PC-9 (cell line): ENCODE measurements at regions of chr3 and their contacts with region 1.

Region 1: DNA sequence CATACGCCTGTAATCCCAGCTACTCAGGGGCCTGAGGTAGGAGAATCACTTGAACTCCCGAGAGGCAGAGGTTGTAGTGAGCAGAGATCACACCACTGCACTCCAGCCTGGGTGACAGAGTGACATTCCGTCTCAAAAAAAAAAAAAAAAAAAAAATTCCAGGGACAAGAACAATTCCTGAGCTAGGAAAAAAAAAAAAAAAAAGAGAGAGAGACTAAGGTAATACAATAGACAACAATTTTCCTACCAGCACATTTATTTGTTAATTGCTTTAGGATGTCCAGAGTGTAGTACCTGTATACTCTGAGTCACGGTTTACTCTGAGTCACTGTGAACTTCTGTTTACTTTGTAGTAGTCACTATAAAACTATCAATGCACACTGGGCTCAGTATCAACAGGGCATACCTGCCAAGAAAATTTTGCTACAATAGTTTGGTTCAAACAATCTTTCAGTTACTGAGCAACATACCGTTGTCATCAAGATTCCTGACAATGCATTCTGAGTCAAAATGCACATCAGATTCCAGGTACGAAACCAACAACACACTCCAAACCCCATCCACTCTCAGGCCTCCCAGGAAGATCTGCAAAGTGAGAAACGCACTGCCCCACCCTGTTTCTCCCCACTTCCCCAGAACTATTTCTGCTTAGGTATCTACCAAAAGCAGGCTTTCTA is 28.3 kb downstream of the IGF2BP2 start:
- DNase-seq: peak; percentile 86 to 100
- H3K4me3 ChIP-seq: 0 out of 2 replicates have a peak overlapping the region, but pooled peaks have one; percentile 10
- H3K27ac ChIP-seq: peak overlapping the region; percentile 93
- H3K4me1 ChIP-seq: peaks cover 63% of the 10 kb centered on the region
- H3K27me3 ChIP-seq: no peaks in the 10 kb centered on the region
- CTCF ChIP-seq: no peak

Region 2: DNA sequence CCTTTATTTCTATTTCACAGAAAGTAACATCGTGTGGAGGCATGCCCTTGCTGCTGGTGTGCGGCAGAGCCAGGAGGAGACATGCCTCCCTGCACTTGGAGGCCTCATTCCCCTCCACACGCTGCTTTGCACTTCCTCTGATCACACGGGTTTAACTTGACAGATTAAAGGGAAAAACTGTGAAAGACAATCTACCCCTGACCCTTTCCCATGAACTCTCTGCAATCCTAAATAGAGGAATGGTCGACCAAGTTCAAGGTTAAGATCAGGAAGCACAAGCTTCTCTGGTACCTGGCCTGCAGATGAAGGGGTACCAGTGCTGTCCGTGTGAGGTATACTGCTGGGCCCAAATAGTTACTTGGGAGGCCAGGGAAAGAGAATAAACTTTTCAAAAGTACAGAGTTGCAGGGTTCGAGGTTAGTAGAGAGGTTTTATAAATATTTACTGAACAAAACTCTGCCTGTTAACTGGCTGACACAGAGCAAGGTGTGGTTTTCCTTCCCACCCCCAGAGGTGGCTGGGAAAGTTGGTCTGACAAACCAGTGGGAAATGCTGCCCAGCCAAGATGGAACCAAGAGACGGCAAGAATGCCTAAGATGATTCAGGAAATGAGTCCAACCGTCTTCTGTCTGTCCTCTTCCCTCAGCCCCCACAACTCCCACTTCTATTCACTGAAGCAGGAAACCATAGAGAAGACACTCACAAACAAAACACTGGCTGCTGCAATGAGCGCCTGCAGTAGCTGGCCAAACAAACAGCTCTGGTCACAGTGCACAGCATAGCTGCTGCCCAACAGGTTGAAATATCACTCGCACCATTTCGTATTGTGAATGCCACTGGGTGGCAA is 51.3 kb before region 1 on chr3:
- CTCF ChIA-PET with region 1: no interaction called
- POLR2A ChIA-PET with region 1: interaction called, 3 read pairs
- intact Hi-C with region 1: loop called (anchors 1 kb)
- DNase-seq: peak in 1 of 2 experiments; percentile 64
- H3K4me3 ChIP-seq: no peak overlapping the region
- H3K27ac ChIP-seq: no peak overlapping the region
- H3K4me1 ChIP-seq: peaks cover 8% of the 10 kb centered on the region; the same call in 1 of the 2 replicates
- H3K27me3 ChIP-seq: no peaks in the 10 kb centered on the region
- CTCF ChIP-seq: no peak

Region 3: GRCh38 chr3:185846037-185846436 is 49.5 kb after region 1 on chr3:
- CTCF ChIA-PET with region 1: no interaction called
- POLR2A ChIA-PET with region 1: interaction called, 14 read pairs
- intact Hi-C with region 1: no loop called
- DNase-seq: no peak
- H3K4me3 ChIP-seq: no peak overlapping the region
- H3K27ac ChIP-seq: no peak overlapping the region
- H3K4me1 ChIP-seq: peaks cover 5% of the 10 kb centered on the region
- H3K27me3 ChIP-seq: no peaks in the 10 kb centered on the region
- CTCF ChIP-seq: no peak

Region 4: DNA sequence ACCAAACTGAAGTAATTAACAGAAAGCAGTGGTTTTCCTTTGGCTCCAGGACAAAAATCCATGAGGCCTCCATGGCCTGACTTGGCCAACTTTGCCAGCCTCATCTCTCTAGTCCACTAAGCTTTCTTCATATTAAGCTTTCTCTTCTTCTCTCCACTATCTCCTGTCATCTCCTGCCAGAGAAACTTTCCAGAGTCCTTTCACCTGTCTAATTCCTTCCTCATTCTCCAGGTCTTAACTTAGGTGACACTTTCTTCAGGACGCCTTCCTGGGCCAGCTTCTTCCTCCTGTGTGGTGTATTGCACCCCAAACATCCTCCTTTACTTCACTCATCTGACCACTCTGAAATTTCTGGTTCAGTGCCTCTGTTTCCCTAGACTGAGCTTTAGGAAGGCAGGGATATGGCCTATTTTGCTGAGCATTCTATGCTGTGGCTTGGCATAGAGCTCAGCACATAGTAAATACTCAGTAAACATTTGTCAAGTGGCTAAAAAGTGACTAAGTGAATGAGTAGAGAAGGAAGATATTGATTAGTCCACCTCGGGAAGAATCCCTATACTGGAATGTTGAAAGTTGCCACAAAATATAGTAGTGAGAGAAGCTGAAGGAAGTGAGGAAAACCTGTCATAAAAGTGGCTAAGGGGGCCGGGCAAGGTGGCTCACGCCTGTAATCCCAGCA is 62.9 kb after region 1 on chr3:
- CTCF ChIA-PET with region 1: no interaction called
- POLR2A ChIA-PET with region 1: interaction called, 19 read pairs
- intact Hi-C with region 1: no loop called
- DNase-seq: no peak
- H3K4me3 ChIP-seq: no peak overlapping the region
- H3K27ac ChIP-seq: no peak overlapping the region
- H3K4me1 ChIP-seq: no peaks in the 10 kb centered on the region
- H3K27me3 ChIP-seq: no peaks in the 10 kb centered on the region
- CTCF ChIP-seq: no peak

Region 5: DNA sequence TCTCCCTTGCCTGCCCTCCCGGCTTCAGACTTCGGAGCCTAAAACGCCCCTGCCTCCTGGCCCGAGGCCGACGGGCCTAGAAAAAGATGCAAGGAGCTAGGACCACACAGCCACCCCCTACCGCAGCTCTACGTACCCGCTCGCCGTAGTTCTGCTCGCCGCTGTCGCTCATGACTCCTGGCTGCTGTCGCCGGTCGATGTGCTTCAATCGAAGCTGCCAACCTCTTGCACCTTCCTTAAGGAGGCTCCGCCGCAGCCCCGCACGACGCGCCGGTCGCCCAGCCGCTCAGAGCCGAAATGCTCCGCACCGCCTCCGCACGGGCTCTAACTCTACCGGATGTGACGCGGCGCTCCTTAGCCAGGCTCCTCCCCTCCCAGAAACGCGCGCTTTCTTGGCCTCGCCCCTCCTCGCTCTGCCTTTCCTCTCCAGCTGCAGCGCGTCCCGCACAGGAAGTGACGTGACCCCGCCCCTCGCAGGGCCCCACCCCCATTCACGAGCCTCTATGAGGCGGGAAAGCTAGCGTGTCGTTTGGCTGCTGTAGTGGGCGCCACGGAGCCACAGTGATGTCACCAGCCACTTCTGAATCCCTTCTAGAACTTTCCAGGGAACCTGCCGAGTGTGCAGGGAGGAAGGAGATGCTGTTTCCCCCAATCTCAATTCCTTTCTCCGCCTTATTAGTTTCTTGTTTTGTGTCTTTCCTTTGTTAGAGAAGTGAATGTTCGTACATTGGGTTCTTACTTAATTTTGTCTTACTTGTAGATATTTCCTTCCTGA is 141.3 kb after region 1 on chr3 and contains the start of gene TRA2B:
- CTCF ChIA-PET with region 1: interaction called, 13 read pairs
- POLR2A ChIA-PET with region 1: interaction called, 15 read pairs
- intact Hi-C with region 1: no loop called
- DNase-seq: peak; percentile 93 to 99
- H3K4me3 ChIP-seq: peak within 1 kb of the TSS; percentile 98
- H3K27ac ChIP-seq: peak within 1 kb of the TSS; percentile 95
- H3K4me1 ChIP-seq: peaks cover 64% of the 10 kb centered on the region
- H3K27me3 ChIP-seq: no peaks in the 10 kb centered on the region
- CTCF ChIP-seq: peak; percentile 22; the same call in 1 of the 2 replicates
- total RNA-seq, gene TRA2B: 117 and 158 TPM in 2 replicates

Region 6: DNA sequence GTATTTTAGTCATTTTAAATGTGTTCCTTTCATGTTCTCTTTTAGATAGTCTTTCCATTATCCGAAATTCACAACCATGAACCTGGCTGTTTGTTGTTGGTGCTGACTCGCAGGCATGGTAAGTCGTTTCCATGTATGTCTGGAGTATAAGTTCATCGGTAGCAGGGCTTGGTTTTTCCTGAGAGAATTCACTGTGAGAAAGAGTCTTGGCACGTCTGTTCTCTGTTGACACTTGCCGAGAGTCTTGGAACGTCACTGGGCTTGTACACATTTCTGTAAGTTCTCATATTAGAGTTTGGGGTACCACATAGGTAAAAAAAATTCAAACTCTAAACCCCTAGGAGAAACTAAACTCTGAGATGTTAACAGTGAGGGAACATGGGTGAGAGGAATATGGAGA is 957.4 kb after region 1 on chr3:
- CTCF ChIA-PET with region 1: no interaction called
- POLR2A ChIA-PET with region 1: interaction called, 19 read pairs
- intact Hi-C with region 1: no loop called
- DNase-seq: no peak
- H3K4me3 ChIP-seq: peak overlapping the region; percentile 46; the same call in 1 of the 2 replicates
- H3K27ac ChIP-seq: peak overlapping the region; percentile 91
- H3K4me1 ChIP-seq: peaks cover 31% of the 10 kb centered on the region
- H3K27me3 ChIP-seq: no peaks in the 10 kb centered on the region
- CTCF ChIP-seq: no peak